ENCODE measurements at regions of chr12 and their contacts with region 1.

Region 1: DNA sequence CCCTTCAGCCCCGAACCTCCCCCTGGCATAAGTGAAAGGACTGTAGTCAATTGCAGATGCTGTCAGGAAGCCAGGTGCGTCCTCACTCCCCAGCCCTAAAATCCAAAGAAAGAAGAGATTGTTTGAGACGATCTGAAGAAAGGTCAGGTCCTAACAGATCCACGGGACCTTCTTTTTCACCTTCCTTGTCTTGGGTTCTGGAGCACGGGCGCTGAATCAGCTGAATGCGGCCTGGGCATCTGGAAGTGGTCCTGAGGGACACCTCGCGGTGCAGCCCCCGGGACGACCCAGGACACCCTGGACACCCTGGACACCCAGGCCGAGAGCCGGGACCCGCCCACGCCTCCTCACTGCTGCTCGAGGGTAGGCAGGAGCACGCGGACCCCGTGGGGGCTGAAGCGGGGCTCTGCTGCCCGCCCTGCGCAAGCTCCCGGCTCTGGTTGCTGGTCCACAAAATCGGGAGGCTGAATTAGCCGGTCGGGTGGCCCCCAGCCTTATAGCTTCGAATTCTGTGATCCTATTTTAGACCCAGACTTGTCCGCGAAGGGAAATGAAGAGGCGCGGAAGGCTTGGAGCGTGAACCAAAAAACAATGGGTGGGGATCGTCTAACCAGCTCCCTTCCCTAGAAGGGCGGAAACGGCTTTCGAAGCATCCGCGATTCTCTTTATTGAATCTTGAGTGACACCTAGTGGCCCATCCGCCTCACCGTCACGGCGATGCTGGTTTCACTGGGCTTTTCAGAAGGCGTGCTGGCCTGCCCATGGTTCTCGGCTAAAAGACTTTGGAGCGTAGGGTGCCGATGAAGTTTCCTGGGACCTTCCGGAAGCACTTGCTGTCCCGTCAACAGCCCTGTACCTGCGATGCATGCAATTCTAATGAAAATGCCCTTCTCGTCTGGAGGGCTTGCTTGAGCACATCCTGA is 46.4 kb upstream of the PLXNC1 start:
- DNase-seq: peak; percentile 93
- H3K4me3 ChIP-seq: peak overlapping the region; percentile 37 to 70 (median 63)
- H3K27ac ChIP-seq: peak overlapping the region; percentile 44 to 80 (median 62)
- H3K4me1 ChIP-seq: peaks cover 0 to 16% (median 14%) of the 10 kb centered on the region in 4 donors
- H3K27me3 ChIP-seq: no peaks in the 10 kb centered on the region
- CTCF ChIP-seq: peak; percentile 60 to 79 (median 73)
- EP300 ChIP-seq: no peak
- POLR2A ChIP-seq: no peak

Region 2: GRCh38 chr12:92995258-92995903 is 1106.6 kb before region 1 on chr12:
- intact Hi-C with region 1: loop called (anchors 10 kb)
- DNase-seq: no peak
- H3K4me3 ChIP-seq: no peak overlapping the region
- H3K27ac ChIP-seq: no peak overlapping the region
- H3K4me1 ChIP-seq: no peaks in the 10 kb centered on the region
- H3K27me3 ChIP-seq: no peaks in the 10 kb centered on the region
- CTCF ChIP-seq: no peak
- EP300 ChIP-seq: no peak
- POLR2A ChIP-seq: no peak

Region 3: GRCh38 chr12:93502802-93503623 is 599.0 kb before region 1 on chr12:
- intact Hi-C with region 1: loop called (anchors 1 kb)
- DNase-seq: no peak
- H3K4me3 ChIP-seq: no peak overlapping the region
- H3K27ac ChIP-seq: no peak overlapping the region
- H3K4me1 ChIP-seq: no peaks in the 10 kb centered on the region
- H3K27me3 ChIP-seq: no peaks in the 10 kb centered on the region
- CTCF ChIP-seq: peak; percentile 48 to 78 (median 74)
- EP300 ChIP-seq: no peak
- POLR2A ChIP-seq: no peak

Region 4: GRCh38 chr12:93748672-93749383 is 353.2 kb before region 1 on chr12:
- intact Hi-C with region 1: loop called (anchors 5 kb)
- DNase-seq: no peak
- H3K4me3 ChIP-seq: no peak overlapping the region
- H3K27ac ChIP-seq: peak overlapping the region in 3 of 4 donors; percentile 10 to 64 (median 63)
- H3K4me1 ChIP-seq: peaks cover 0 to 49% (median 22%) of the 10 kb centered on the region in 4 donors
- H3K27me3 ChIP-seq: no peaks in the 10 kb centered on the region
- CTCF ChIP-seq: no peak
- EP300 ChIP-seq: no peak
- POLR2A ChIP-seq: no peak